Astrocyte of the cerebellum (primary cell): ENCODE measurements at regions of chr3 and their contacts with region 1.

Region 1: DNA sequence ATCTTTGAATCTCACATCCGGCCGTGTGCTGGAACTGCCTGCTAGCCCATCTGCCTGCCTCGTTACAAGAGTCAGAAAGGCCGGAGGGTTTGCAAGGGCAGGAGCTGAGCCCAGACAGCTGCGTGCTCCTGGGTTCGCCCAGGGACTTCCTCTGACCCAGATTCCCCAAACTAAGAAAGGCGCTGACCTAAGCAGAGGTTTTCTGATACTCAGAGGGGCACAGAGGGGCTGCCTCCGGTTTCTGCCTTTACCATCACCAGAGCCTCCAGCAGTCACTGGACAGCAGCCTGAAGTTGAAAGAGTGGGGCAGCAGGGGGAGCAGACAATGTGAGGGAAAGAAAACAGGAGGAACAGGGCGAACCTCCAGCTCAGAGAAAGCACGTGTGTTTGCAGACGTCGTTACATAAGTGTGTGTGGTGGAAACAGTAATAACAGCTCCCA is 33.4 kb upstream of the RAD18 start:
- DNase-seq: peak; percentile 9
- H3K4me3 ChIP-seq: no peak overlapping the region
- CTCF ChIP-seq: peak; percentile 48

Region 2: DNA sequence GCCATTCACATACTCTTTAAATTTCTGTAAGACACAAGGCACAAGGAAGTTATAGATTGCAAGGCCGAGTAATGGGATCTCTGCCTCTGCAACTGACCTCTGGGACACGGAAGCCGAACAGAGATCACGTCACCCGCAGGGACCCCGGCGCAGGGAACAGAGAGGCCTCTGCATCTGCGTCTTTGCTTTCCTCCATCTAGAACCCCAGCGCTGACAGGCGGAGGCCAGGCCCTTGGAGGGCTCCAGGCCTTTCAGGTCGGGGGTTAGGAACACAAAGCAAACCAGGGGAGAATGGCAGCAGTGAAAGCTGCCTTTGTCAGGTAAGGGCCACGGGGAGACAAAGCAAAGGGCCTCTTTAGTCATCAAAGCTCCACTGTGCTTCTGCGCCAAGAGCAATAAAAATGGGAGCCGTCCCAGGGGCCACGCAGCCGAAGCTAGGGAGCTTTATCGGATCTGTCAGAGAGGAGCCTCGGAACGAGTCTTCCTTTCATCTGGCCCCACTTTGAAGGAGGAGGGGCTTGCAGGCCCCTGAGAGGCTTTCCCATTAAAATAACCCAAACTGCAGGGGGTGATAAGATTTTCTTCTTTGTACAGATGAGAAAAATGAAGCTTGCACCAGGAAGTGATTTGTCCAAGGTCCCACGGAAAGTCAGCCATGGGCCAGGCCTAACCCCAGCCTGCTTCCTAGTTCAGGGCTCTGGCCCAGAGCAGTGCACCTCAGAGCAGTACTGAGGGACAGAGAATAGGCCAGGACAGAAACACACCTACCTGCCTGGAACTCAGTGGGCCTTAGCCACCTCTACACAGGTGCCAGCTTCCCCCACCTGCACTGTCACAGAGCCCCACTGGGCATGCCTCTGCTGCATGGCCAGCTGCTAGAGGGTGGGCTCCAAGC is 51.0 kb after region 1 on chr3:
- in situ Hi-C with region 1: no loop called
- DNase-seq: no peak
- H3K4me3 ChIP-seq: no peak overlapping the region
- CTCF ChIP-seq: no peak

Region 3: DNA sequence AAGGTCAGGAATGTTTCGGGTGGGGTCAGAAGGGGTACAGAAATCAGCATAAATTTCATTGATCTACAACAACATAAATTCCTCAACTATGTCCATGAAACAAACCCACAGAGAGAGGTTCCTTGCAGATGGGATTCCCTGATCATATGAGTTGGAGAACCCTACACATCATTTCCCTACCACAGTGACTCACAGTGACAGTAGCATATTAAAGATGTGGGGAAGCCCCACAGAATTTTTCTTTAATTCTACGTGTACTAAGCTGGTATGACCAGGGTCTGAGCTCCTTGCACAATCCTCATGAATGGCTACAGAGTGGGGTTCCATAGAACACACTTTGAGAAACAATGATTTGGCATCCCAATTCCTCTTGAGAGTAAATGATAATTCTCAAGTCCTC is 83.5 kb after region 1 on chr3:
- in situ Hi-C with region 1: loop called (anchors 5 kb)
- DNase-seq: no peak
- H3K4me3 ChIP-seq: no peak overlapping the region
- CTCF ChIP-seq: no peak

Region 4: DNA sequence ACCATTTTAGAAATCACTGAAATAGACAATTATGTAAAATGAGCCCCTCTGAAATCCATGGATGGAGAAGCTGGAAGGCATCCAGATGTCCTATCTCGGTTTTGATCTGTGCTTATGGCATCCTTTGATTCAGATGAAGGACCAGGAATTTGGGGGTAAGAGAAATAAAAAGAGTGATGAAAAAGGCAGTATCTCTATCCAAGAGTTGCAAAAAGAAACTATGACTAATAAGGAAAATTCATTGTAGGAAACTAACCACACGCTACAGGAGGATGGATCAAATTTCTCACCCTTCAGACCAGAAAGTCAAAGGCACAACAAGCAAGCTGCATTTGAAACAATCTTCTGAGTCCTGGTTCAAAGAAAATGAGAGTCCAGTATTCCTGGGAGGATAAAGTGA is 217.9 kb after region 1 on chr3:
- in situ Hi-C with region 1: loop called (anchors 10 kb)
- DNase-seq: peak; percentile 79
- H3K4me3 ChIP-seq: no peak overlapping the region
- CTCF ChIP-seq: no peak